Left ventricle myocardium inferior (tissue), 1 donor: ENCODE measurements at regions of chr2 and their contacts with region 1.

Region 1: DNA sequence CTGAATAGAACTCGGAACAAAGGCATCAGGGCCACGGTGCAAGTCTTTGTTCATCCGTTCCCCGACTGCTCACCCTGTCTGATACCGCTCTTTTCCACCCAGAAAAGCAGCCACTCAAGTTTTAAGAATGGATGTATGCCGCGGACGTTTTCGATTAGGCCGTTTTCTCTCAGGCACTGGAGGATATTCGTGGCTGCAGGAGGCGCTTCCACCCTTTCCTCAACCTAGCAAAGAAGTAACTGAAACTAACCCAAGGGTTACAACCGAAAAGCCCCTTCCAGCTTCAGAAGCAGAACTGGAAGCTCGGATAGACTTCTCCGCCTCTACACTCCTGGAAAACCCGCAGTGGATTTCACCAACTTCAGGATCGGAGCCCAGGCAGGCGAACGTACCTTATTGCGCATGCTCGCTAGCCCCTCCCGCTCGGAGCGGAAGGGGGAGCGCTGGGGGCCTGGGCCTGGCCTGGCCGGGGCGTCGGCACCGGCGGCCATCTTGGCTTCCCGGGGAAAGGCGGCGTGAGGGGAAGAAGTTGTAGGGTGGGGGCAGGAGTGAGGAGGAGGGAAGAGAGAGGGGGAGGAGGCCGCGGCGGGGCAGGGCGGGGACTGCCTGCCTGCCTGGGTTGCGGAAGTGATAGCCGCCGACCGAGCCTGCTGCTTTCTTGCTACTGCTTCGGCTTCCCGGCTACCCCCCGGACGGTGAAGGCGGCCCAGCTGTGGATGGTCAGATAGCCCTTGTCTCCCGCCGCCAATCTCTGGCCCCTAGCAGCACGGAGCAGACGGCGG is at the start of gene ACTR3:
- DNase-seq: peak; percentile 97
- H3K4me3 ChIP-seq: peak within 1 kb of the TSS; percentile 95
- H3K27ac ChIP-seq: peak within 1 kb of the TSS; percentile 97
- H3K4me1 ChIP-seq: peaks cover 79% of the 10 kb centered on the region
- H3K27me3 ChIP-seq: no peaks in the 10 kb centered on the region
- CTCF ChIP-seq: no peak
- total RNA-seq, gene ACTR3: 108 TPM

Region 2: GRCh38 chr2:113756355-113757137 is 133.1 kb before region 1 on chr2 and contains the start of gene SLC35F5:
- intact Hi-C with region 1: loop called (anchors 10 kb)
- DNase-seq: peak; percentile 95
- H3K4me3 ChIP-seq: peak within 1 kb of the TSS; percentile 98
- H3K27ac ChIP-seq: peak within 1 kb of the TSS; percentile 95
- H3K4me1 ChIP-seq: peaks cover 46% of the 10 kb centered on the region
- H3K27me3 ChIP-seq: no peaks in the 10 kb centered on the region
- CTCF ChIP-seq: peak; percentile 3
- total RNA-seq, gene SLC35F5: 61.4 TPM

Region 3: DNA sequence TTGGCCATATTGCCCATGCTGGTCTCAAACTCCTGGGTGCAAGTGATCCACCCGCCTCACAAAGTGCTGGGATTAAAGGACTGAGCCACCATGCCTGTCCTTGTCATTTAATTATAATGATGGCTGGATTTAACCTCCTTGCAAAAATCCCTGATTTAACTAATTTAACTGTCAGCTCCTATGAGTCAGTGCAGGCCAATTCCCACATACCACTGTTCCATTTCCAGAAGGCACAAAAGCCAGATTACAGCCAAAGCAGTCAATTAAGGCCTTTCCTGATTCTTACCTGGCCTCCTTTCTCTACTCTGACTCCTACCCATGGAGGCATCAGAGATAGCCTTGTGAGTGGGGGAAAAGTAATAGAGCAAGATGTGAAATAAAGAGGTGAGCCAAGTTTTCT is 120.9 kb before region 1 on chr2:
- intact Hi-C with region 1: no loop called
- DNase-seq: no peak
- H3K4me3 ChIP-seq: no peak overlapping the region
- H3K27ac ChIP-seq: no peak overlapping the region
- H3K4me1 ChIP-seq: no peaks in the 10 kb centered on the region
- H3K27me3 ChIP-seq: no peaks in the 10 kb centered on the region
- CTCF ChIP-seq: no peak